ENCODE measurements at regions of chr1 and their contacts with region 1.

Region 1: GRCh38 chr1:59290193-59290947 is 6.5 kb upstream of the FGGY start:
- DNase-seq: peak; percentile 62 to 85 (median 76)
- H3K4me3 ChIP-seq: no peak overlapping the region
- H3K4me3 Mint-ChIP-seq: no peak overlapping the region
- H3K27ac ChIP-seq: peak overlapping the region in 1 of 2 donors; percentile 88
- H3K27ac Mint-ChIP-seq: peak overlapping the region; percentile 2 to 95 (median 90)
- H3K4me1 ChIP-seq: peaks cover 37 to 38% of the 10 kb centered on the region in 2 donors
- H3K4me1 Mint-ChIP-seq: peaks cover 44% of the 10 kb centered on the region
- H3K27me3 ChIP-seq: no peaks in the 10 kb centered on the region
- H3K27me3 Mint-ChIP-seq: no peaks in the 10 kb centered on the region
- CTCF ChIP-seq: peak; percentile 73

Region 2: GRCh38 chr1:59013276-59013927 is 277.0 kb before region 1 on chr1:
- intact Hi-C with region 1: loop called in 1 of 2 experiments (anchors 5 kb)
- DNase-seq: peak in 1 of 3 donors; percentile 23
- H3K4me3 ChIP-seq: no peak overlapping the region
- H3K4me3 Mint-ChIP-seq: peak overlapping the region; percentile 34 to 65
- H3K27ac ChIP-seq: no peak overlapping the region
- H3K27ac Mint-ChIP-seq: peak overlapping the region in 2 of 7 donors; percentile 10 to 77
- H3K4me1 ChIP-seq: peaks cover 17 to 22% of the 10 kb centered on the region in 2 donors
- H3K4me1 Mint-ChIP-seq: peaks cover 34% of the 10 kb centered on the region
- H3K27me3 ChIP-seq: no peaks in the 10 kb centered on the region
- H3K27me3 Mint-ChIP-seq: peaks cover 2 to 5% (median 4%) of the 10 kb centered on the region in 3 donors
- CTCF ChIP-seq: no peak